ENCODE measurements at regions of chr12 and their contacts with region 1.

Region 1: GRCh38 chr12:118120579-118121363 is 15.2 kb upstream of the PEBP1 start:
- DNase-seq: peak; percentile 81
- ATAC-seq: peak; percentile 82
- H3K4me3 Mint-ChIP-seq: peak overlapping the region; percentile 48
- H3K27ac Mint-ChIP-seq: peak overlapping the region; percentile 100
- H3K4me1 Mint-ChIP-seq: peaks cover 43% of the 10 kb centered on the region
- H3K27me3 Mint-ChIP-seq: no peaks in the 10 kb centered on the region
- CTCF ChIP-seq: peak; percentile 77

Region 2: DNA sequence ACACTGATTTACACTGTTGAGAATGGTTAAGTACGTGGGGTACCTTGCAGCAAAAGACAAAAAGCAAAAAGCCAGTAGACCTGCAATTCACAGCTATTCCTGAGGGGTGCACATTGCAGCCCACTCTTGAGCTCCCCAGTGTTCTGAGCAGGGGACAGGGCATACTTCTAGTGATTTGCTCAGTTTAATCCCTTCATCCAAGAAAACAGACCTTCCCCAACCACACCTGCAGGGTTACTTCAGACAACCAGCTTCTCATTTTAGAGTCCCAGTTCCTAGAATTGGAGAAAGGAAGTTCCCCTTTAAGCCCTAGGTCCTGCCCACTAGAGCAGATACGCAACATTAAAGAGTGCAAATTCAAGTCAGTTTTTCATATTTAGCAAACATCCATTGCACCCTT is 56.2 kb before region 1 on chr12:
- CTCF ChIA-PET with region 1: interaction called, 18 read pairs
- POLR2A ChIA-PET with region 1: interaction called, 3 read pairs
- DNase-seq: peak; percentile 26
- ATAC-seq: peak; percentile 42
- H3K4me3 Mint-ChIP-seq: peak overlapping the region; percentile 89
- H3K27ac Mint-ChIP-seq: peak overlapping the region; percentile 82
- H3K4me1 Mint-ChIP-seq: peaks cover 38% of the 10 kb centered on the region
- H3K27me3 Mint-ChIP-seq: no peaks in the 10 kb centered on the region
- CTCF ChIP-seq: peak; percentile 15; the same call in 1 of the 2 replicates

Region 3: DNA sequence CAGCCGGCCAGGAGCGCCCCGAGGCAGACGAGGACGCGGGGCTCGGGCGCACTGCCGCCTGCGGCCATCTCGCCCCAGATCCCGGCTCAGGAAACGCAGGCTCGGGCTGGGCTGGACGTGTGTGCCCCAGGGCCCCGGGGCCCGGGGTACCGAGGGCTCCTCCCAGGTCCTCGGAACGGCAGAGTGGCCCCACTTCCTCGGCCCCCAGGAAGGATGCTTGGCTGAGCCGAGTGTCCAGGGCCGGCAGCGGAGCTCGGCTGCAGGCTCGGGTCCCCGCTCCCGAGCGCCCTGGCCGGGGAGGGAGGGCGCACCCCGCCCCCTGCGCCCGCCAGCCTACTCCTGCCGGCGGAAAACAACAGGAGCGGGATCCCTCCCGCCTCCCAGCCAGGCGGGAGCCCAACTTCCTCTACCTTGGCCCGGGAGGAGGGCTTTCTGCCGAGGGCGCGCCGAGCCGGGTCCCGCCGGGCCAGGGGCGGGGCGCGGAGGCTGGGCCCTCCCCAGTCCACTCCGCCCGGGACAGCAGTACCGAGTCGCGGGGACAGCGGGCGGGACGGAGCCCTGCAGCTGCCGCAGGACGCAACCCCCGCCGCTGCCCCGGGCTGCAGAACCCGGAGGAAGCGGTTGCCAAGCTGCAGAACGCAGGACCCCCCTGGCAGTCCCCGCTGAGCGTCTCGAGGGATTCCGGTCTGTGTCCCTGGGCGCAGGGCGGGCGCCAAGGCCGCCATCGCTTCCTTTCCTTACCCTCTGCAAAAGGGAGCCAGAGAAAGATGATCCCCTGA is 17.0 kb before region 1 on chr12 and contains the start of gene VSIG10:
- CTCF ChIA-PET with region 1: interaction called, 16 read pairs
- POLR2A ChIA-PET with region 1: interaction called, 8 read pairs
- DNase-seq: peak; percentile 68
- ATAC-seq: peak; percentile 75
- H3K4me3 Mint-ChIP-seq: peak within 1 kb of the TSS; percentile 95
- H3K27ac Mint-ChIP-seq: peak within 1 kb of the TSS; percentile 97
- H3K4me1 Mint-ChIP-seq: peaks cover 39% of the 10 kb centered on the region
- H3K27me3 Mint-ChIP-seq: no peaks in the 10 kb centered on the region
- CTCF ChIP-seq: no peak
- total RNA-seq, gene VSIG10: 69.7 to 82.5 TPM (median 74.4 TPM) in 3 replicates

Region 4: DNA sequence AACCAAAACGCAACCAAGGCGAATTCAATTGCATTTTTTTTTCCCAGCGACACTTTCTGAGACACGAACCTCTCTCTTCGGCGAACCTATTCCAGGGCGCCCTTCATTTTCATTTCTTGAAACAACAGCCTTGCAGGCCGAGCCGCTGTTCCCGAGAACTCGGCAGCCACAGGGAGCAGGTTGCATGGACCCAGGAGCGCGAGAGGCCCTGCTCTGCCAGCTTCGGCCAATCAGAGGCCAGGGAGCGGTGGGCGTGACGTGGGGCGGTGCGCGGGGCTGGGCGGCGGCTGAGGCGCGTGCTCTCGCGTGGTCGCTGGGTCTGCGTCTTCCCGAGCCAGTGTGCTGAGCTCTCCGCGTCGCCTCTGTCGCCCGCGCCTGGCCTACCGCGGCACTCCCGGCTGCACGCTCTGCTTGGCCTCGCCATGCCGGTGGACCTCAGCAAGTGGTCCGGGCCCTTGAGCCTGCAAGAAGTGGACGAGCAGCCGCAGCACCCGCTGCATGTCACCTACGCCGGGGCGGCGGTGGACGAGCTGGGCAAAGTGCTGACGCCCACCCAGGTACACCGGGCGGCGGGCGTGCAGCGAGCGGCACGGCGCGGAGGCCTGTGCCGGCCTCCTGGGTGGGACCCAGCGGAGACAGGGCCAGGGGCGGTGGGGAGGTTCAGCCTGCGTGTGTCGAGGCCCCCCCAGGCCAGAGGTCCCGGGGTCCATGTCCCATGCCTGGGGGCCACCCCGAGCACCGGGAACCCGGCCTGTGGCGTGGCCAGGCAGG is 15.2 kb after region 1 on chr12 and contains the start of gene PEBP1:
- CTCF ChIA-PET with region 1: interaction called, 35 read pairs
- POLR2A ChIA-PET with region 1: interaction called, 11 read pairs
- DNase-seq: peak; percentile 87
- ATAC-seq: peak; percentile 95
- H3K4me3 Mint-ChIP-seq: peak within 1 kb of the TSS; percentile 89
- H3K27ac Mint-ChIP-seq: peak within 1 kb of the TSS; percentile 97
- H3K4me1 Mint-ChIP-seq: peaks cover 16% of the 10 kb centered on the region
- H3K27me3 Mint-ChIP-seq: no peaks in the 10 kb centered on the region
- CTCF ChIP-seq: no peak
- total RNA-seq, gene PEBP1: 347 to 366 TPM (median 363 TPM) in 3 replicates

Region 5: GRCh38 chr12:118175823-118176447 is 55.2 kb after region 1 on chr12:
- CTCF ChIA-PET with region 1: interaction called, 16 read pairs
- POLR2A ChIA-PET with region 1: interaction called, 3 read pairs
- DNase-seq: no peak
- ATAC-seq: no peak
- H3K4me3 Mint-ChIP-seq: no peak overlapping the region
- H3K27ac Mint-ChIP-seq: no peak overlapping the region
- H3K4me1 Mint-ChIP-seq: peaks cover 7% of the 10 kb centered on the region; the same call in 1 of the 2 replicates
- H3K27me3 Mint-ChIP-seq: no peaks in the 10 kb centered on the region
- CTCF ChIP-seq: no peak

Region 6: GRCh38 chr12:118212606-118213005 is 91.8 kb after region 1 on chr12:
- CTCF ChIA-PET with region 1: no interaction called
- POLR2A ChIA-PET with region 1: no interaction called
- DNase-seq: no peak
- ATAC-seq: no peak
- H3K4me3 Mint-ChIP-seq: no peak overlapping the region
- H3K27ac Mint-ChIP-seq: no peak overlapping the region
- H3K4me1 Mint-ChIP-seq: 0 out of 2 replicates have a peak, but pooled peaks cover 4% of the 10 kb centered on the region
- H3K27me3 Mint-ChIP-seq: no peaks in the 10 kb centered on the region
- CTCF ChIP-seq: no peak

Region 7: GRCh38 chr12:118282767-118283166 is 162.0 kb after region 1 on chr12:
- CTCF ChIA-PET with region 1: no interaction called
- POLR2A ChIA-PET with region 1: no interaction called
- DNase-seq: no peak
- ATAC-seq: no peak
- H3K4me3 Mint-ChIP-seq: no peak overlapping the region
- H3K27ac Mint-ChIP-seq: no peak overlapping the region
- H3K4me1 Mint-ChIP-seq: no peaks in the 10 kb centered on the region
- H3K27me3 Mint-ChIP-seq: no peaks in the 10 kb centered on the region
- CTCF ChIP-seq: no peak

Measured in WTC11 (cell line).